BJ (cell line): ENCODE measurements at regions of chrX and their contacts with region 1.

Region 1: GRCh38 chrX:151753313-151754041 is 18.9 kb downstream of the CNGA2 start:
- DNase-seq: no peak
- H3K4me3 ChIP-seq: no peak overlapping the region
- H3K27me3 ChIP-seq: no peaks in the 10 kb centered on the region; the same call in 1 of the 2 replicates
- CTCF ChIP-seq: peak; percentile 88

Region 2: GRCh38 chrX:151621422-151621821 is 132.1 kb before region 1 on chrX:
- CTCF ChIA-PET with region 1: no interaction called
- POLR2A ChIA-PET with region 1: no interaction called
- DNase-seq: no peak
- H3K4me3 ChIP-seq: no peak overlapping the region
- H3K27me3 ChIP-seq: no peaks in the 10 kb centered on the region
- CTCF ChIP-seq: no peak

Region 3: DNA sequence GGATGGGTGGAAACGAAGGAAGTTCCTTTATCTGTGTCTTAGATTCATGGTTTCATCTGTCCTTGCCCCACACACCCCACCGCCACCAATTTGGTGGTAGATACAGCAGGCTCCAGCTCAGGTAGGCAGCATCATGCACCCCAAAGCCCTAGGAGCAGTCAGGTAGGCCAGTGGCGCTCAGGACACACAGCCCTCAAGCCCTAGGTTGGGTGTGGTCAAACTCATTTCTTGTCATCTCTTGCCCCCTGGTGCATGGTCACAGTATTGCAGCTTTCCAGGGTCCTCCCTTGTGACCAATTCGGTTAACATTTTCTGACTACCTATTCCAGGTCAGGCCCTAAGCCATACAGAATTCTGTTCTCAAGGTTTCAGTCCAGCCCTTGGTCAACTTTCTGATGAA is 72.7 kb before region 1 on chrX:
- CTCF ChIA-PET with region 1: no interaction called
- POLR2A ChIA-PET with region 1: no interaction called
- DNase-seq: no peak
- H3K4me3 ChIP-seq: no peak overlapping the region
- H3K27me3 ChIP-seq: no peaks in the 10 kb centered on the region
- CTCF ChIP-seq: peak; percentile 51

Region 4: GRCh38 chrX:151825927-151826481 is 72.5 kb after region 1 on chrX:
- CTCF ChIA-PET with region 1: interaction called, 30 read pairs
- POLR2A ChIA-PET with region 1: no interaction called
- DNase-seq: peak; percentile 89
- H3K4me3 ChIP-seq: no peak overlapping the region
- H3K27me3 ChIP-seq: no peaks in the 10 kb centered on the region
- CTCF ChIP-seq: peak; percentile 45

Region 5: DNA sequence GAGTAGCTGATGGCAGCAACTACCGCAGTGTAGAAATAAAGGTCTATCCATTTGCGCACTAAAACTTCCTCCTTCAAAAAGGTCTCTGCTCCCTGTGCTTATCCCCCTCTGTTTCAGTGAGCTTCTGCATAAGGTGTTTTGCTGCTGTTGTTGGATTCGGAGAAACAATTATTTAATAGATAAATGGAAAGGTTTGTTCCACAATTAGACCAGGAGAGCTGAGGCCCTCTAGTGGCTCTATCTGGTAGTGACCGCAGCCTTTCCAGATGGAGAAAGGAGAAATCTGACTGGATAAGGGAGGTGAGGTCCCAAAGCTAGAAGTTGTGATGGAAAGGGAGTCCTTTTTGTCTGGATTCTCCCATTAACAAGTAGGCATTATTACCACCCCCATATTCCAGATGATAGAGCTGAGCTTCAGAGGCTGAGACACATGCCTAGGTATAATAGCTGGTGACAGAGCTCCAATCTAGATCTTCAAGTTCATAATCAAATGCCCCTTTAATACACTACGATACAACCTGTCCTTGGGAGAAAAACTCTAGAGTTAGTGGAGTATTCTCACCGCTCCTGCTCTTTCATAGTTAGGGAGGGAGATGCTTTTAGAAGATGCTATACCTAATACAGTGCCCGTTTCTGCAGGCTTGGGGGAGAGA is 879.1 kb after region 1 on chrX:
- CTCF ChIA-PET with region 1: interaction called, 140 read pairs
- POLR2A ChIA-PET with region 1: interaction called, 4 read pairs
- DNase-seq: no peak
- H3K4me3 ChIP-seq: no peak overlapping the region
- H3K27me3 ChIP-seq: no peaks in the 10 kb centered on the region
- CTCF ChIP-seq: peak; percentile 77

Region 6: GRCh38 chrX:152641996-152642395 is 888.5 kb after region 1 on chrX:
- CTCF ChIA-PET with region 1: interaction called, 82 read pairs
- POLR2A ChIA-PET with region 1: no interaction called
- DNase-seq: no peak
- H3K4me3 ChIP-seq: no peak overlapping the region
- H3K27me3 ChIP-seq: peaks cover 2% of the 10 kb centered on the region
- CTCF ChIP-seq: no peak

Region 7: DNA sequence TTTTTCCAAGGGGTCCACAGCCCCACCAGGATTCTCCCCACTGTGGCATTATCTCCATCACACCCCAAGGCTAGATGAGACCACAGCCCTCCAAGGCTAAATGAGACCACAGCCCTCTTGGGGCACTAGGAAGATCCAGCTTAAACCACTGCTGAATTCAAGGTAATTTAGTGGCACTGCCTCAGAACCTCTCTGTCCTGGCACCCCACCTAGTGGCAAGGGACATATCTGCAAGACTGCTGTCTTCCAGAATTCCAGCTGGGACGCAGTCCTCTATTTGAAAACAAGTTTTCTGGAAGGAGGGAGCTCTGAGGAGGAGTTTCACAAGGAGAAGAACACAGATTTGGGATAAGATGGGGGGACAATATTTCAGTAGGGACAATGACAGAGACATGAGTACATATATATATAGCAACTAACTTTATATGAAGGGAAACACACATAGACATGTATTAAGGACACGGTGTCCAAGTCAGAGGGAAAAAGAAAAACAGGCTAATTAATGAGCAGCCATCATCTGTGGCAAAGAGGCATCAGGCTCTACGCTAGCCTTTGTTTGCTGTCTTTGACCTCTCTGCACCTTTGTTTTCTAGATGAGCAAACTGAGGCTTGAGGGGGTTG is 1067.8 kb after region 1 on chrX:
- CTCF ChIA-PET with region 1: interaction called, 16 read pairs
- POLR2A ChIA-PET with region 1: no interaction called
- DNase-seq: no peak
- H3K4me3 ChIP-seq: no peak overlapping the region
- H3K27me3 ChIP-seq: no peaks in the 10 kb centered on the region
- CTCF ChIP-seq: peak; percentile 68